HEK293T (cell line): ENCODE measurements at regions of chr10 and their contacts with region 1.

Region 1: DNA sequence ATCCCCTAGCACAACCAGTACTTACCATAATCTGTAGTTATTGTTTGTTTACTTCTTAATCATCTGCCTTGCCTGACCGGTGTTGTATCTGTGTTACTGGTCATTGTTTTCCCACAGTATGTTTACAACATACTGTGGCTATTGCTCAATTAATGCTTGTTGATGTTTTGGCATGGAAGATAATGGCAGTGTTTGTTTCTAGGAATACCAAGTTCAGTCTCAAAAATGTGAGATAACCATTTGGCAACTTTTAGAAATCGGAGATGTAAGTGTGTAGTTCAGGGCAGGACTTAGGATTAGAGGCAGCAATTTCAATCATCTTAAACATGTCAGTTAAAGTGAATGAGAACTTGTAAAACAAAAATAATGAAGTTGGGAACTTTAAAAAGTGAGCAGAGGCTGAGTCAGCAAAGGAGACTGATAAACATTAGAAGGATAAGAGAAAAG is 8.2 kb downstream of the MINDY3 start:
- DNase-seq: no peak

Region 2: DNA sequence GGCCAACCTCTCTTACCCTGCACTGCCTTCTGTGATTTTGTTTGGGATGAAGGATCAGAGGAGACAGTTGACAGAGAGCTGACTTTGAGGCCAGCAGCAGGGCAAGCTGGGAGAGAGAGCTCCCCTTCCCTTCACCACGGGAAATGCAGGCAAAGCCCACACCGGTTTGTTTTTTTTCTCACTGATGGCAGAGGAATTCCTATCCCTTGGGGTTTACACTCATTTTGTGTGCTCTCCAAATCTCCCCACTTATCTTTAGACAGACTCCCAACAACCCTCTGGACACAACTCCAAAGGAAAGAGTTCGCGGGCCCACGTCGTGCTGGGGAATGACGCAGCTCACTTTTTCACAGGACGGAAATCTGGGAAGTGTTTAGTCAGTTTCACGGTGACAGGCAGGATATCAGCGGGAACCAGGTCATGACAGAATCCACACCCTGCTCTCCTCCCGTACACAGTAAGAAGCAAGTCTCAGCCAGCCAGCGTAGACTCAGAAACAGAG is 412.7 kb before region 1 on chr10:
- CTCF ChIA-PET with region 1: interaction called, 10 read pairs
- POLR2A ChIA-PET with region 1: no interaction called
- DNase-seq: peak; percentile 62

Region 3: DNA sequence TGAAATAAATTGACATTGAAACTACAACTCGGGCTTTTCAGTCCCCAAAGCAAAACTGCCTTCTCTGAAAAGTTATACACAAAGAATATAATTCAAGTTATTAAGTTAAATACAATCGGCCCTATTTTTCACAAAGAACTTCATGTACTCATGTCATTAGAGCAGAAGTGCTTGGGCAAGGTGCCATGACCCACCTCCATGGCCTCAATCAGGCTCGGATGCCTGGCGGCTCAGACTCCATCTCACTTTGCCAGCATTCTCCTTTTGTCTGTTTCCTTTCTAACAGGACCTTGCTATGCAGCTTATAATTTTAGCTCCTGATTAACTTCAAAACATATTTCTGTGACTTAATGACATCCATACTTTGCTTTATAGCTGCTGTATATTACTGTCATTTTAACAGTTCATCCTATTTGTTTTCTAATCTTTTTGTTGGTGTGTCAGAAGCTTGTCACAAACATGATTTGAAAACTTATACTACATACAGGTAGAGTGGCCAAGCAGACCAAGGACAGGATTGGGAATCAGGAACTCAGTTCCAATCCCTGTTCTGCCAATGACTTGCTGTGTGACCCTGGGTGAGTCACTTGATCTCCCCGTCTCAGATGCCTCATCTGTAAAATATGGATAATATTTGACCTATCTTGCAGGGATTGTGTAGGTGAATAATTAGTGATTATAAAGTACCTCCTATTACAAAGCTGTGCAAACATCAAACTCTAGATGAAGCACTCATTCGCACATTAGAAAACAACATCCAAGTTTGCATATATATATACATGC is 71.6 kb before region 1 on chr10:
- CTCF ChIA-PET with region 1: no interaction called
- POLR2A ChIA-PET with region 1: no interaction called
- DNase-seq: no peak

Region 4: DNA sequence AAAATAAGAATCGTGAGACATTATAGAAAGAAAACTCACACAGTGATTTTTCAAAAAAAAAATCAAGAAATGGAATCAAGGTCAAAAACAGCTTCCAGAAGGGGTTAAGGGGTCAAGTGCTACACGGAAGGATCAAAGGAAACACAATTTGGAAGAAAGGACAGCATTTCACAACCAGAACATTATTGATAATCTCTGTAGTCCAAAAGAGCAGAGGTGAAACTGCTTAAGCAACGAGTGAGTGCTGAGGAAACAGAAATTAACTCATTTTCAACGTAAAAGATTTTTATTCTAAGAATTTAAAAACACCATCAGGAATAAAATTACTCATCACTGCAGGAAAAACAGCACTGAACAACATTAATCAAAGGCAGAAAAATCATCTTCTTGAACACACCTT is 15.3 kb before region 1 on chr10:
- CTCF ChIA-PET with region 1: no interaction called
- POLR2A ChIA-PET with region 1: no interaction called
- DNase-seq: no peak